PC-3 (cell line): ENCODE measurements at regions of chr2 and their contacts with region 1.

Region 1: DNA sequence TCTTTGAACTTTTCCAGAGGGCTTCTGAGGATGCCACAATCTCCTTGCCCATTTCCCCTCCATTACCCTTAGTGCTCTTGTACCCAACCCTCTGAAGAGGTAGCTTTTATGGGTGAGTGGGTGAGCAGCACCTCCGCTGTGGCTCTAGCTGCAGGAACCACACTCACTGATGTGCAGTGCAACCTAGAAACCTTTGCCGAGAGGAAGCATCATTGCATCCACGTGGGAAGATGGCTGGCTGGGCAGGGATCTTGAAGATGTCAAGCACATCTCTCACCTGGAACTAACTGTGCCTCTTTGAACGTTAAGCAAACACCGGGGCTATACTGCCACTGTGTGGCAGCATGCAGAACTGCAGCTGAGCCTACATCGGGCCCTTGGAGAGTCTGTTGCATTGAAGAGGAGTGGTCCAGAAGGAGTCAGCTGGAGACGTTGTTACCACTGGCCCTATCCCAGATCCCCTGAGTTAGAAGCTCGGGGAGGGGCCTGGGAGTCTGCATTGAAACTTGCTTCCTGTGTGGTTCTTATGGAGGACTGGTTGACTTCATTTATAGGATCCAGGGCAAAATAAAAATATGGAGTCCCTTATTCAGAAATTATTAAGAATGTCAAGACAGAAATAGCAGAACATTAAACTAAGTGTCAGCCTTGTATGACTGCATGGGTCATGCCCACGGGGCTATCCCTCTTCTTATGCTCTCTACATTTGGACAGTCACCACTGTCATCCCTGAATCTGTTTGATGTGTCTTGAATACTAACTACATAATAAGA is 28.7 kb downstream of the IGFBP5 start:
- DNase-seq: peak; percentile 93
- ATAC-seq: peak; percentile 94
- H3K4me3 ChIP-seq: no peak overlapping the region
- H3K27ac ChIP-seq: no peak overlapping the region
- H3K4me1 ChIP-seq: peaks cover 17% of the 10 kb centered on the region
- H3K27me3 ChIP-seq: no peaks in the 10 kb centered on the region
- CTCF ChIP-seq: peak; percentile 99

Region 2: GRCh38 chr2:216412022-216412999 is 254.3 kb before region 1 on chr2 and contains the start of gene SMARCAL1:
- CTCF ChIA-PET with region 1: no interaction called
- POLR2A ChIA-PET with region 1: no interaction called
- intact Hi-C with region 1: loop called (anchors 5 kb)
- DNase-seq: peak; percentile 98
- ATAC-seq: peak; percentile 92
- H3K4me3 ChIP-seq: peak within 1 kb of the TSS; percentile 89
- H3K27ac ChIP-seq: peak within 1 kb of the TSS; percentile 41
- H3K4me1 ChIP-seq: no peaks in the 10 kb centered on the region; the same call in 1 of the 2 replicates
- H3K27me3 ChIP-seq: no peaks in the 10 kb centered on the region
- CTCF ChIP-seq: no peak
- total RNA-seq, gene SMARCAL1: 8.3 and 17.2 TPM in 2 replicates

Region 3: GRCh38 chr2:216519154-216519762 is 147.4 kb before region 1 on chr2:
- CTCF ChIA-PET with region 1: interaction called, 17 read pairs
- POLR2A ChIA-PET with region 1: no interaction called
- intact Hi-C with region 1: loop called (anchors 1 kb)
- DNase-seq: peak; percentile 89
- ATAC-seq: peak; percentile 84
- H3K4me3 ChIP-seq: no peak overlapping the region
- H3K27ac ChIP-seq: no peak overlapping the region
- H3K4me1 ChIP-seq: no peaks in the 10 kb centered on the region
- H3K27me3 ChIP-seq: no peaks in the 10 kb centered on the region
- CTCF ChIP-seq: peak; percentile 91

Region 4: DNA sequence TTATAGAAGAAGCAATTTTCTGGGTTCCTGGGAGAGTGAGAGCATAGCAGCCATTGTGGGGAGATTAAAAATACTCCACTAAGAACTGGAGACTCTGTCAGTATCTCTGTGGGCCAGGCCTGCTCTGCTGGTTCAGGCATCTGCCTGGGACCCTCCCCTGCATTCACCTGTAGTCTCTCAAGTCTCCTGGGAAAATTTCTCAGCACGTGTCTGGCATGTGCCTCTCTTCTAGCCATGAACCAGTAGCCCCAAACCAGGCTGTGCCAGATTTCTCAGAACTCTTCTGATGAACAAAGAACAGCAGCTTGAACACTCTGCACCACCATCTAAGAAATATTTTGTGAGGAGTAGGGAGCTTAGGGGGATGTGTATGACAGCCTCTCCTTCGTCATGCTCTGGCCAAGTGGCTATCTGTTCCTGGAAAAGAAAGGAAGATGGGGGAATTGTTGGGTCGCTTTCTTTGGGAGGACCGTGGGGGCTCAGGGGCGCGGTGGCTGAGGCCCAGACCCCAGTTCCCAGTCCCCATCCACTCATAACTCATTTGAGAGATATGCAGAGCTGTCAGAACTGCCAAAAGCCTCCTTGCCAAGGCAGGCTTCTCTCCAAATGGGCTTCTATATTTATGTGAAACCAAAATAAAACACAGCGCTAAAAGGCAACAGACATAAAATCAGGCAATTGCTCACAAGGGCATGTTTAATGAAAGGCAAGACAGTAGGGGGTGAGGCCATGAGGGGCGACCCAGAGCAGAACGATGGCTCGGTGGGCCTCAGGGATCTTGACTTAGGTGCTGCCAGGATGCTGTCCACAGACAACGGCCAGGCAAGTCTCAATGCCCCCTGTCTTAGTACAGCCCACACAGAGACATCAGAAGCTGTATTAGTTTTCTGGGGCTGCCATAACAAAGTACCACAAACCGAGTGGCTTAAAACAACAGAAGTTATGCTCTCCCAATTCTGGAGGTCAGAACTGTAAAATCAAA is 308.0 kb after region 1 on chr2:
- CTCF ChIA-PET with region 1: no interaction called
- POLR2A ChIA-PET with region 1: no interaction called
- intact Hi-C with region 1: no loop called
- DNase-seq: no peak
- ATAC-seq: no peak
- H3K4me3 ChIP-seq: no peak overlapping the region
- H3K27ac ChIP-seq: no peak overlapping the region
- H3K4me1 ChIP-seq: no peaks in the 10 kb centered on the region
- H3K27me3 ChIP-seq: no peaks in the 10 kb centered on the region
- CTCF ChIP-seq: no peak